ENCODE measurements at regions of chr21 and their contacts with region 1.

Region 1: DNA sequence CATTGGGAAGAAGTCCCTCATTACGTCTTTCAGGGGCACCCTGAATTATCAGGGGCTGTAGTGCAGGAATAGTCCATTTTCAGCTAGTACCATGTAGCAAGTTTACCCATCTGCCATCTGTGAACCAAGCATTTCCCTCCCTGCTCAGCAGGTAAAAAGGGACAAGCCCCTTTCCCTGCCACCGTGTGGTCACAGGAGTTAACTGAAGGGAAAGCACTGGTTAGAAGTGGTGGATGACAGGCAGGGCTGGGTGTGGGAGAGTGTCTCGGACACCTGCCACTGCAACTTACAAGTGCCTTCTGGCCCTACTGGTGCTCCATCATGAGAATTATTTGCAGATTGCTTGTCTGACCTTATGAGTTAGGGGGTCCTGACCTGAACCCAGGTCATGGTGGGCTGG is 32.0 kb upstream of the IGSF5 start:
- DNase-seq: no peak
- ATAC-seq: no peak
- H3K4me3 ChIP-seq: no peak overlapping the region
- H3K27ac ChIP-seq: no peak overlapping the region
- H3K4me1 ChIP-seq: no peaks in the 10 kb centered on the region
- H3K27me3 ChIP-seq: peaks cover 8% of the 10 kb centered on the region
- CTCF ChIP-seq: no peak

Region 2: DNA sequence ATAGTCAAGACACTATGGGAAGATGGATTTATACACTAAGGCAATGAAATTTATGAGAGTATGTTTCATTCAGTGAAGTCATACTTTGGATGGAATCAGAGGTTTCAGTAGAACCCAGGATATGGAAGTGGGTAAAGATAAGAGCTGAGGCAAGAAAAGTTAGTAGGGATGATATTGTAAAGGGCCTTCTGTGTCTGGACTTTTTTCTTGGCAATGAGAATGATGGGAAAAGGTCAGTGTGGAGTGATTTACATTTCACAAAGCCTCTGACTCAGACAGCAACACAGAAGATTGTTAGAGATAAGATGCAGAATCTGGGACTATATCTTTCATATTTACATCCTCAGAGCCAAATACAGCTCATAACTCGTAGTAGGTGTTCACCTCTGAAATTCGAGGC is 229.0 kb before region 1 on chr21:
- intact Hi-C with region 1: no loop called
- DNase-seq: no peak
- ATAC-seq: no peak
- H3K4me3 ChIP-seq: no peak overlapping the region
- H3K27ac ChIP-seq: no peak overlapping the region
- H3K4me1 ChIP-seq: no peaks in the 10 kb centered on the region
- H3K27me3 ChIP-seq: no peaks in the 10 kb centered on the region
- CTCF ChIP-seq: no peak

Region 3: GRCh38 chr21:39523399-39523798 is 189.6 kb before region 1 on chr21:
- intact Hi-C with region 1: loop called (anchors 5 kb)
- DNase-seq: no peak
- ATAC-seq: peak; percentile 40
- H3K4me3 ChIP-seq: no peak overlapping the region
- H3K27ac ChIP-seq: no peak overlapping the region
- H3K4me1 ChIP-seq: peaks cover 10% of the 10 kb centered on the region
- H3K27me3 ChIP-seq: no peaks in the 10 kb centered on the region
- CTCF ChIP-seq: no peak

Region 4: DNA sequence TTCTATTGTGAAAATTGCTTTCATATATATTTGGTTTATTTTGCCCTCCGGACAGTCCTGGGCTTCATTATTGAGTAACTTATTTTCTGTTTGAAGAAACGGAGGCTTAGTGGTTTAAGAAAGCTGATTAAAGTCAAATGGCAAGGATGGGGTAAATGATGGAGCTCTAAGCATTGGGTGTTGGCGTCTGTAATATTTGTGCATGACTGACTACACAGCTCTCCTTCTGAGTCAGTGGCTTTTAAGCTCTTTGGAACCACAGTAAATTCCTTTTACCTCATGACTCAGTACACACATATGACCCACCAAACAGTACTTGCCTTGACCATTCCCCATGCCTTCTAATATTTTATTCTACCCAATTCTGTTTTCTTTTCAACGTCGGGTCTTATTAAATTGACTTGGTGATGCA is 79.2 kb before region 1 on chr21:
- intact Hi-C with region 1: no loop called
- DNase-seq: no peak
- ATAC-seq: no peak
- H3K4me3 ChIP-seq: no peak overlapping the region
- H3K27ac ChIP-seq: no peak overlapping the region
- H3K4me1 ChIP-seq: no peaks in the 10 kb centered on the region
- H3K27me3 ChIP-seq: peaks cover 6% of the 10 kb centered on the region
- CTCF ChIP-seq: no peak

Measured in upper lobe of right lung (tissue), 1 donor.